ENCODE measurements at regions of chr20 and their contacts with region 1.

Region 1: DNA sequence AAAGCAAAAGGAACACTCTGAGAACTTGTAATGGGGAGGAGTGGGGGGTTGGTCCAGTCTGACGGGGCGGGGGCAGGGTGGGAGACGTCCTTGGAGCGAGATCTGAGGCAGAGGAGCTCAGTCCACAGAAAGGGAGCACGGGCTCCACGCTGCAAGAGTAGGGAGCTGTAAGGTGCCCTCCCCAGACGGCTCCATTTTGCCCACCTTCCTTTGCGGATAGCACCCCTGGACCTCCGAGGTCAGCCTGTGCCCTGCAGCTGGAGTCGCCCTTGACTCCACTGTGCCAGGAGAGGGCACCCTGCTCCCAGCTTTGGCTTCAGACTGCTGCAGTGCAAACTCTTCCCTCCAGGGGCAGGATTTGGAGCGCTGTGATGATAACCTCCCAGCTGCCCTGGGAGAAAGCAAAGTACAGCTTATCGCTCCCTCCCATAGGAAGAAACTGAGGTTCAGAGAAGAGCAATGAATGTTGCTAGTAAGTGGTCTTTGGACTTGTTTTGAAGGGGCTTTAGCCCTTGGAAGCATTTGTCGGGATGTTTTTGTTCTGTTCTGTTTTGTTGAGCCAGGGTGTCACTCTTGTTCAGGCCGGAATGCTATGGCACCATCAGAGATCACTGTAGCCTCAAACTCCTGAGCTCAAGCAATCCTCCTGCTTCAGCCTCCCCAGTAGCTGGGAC is 9.5 kb upstream of the AHCY start:
- DNase-seq: peak; percentile 76 to 89 (median 80)
- H3K4me3 ChIP-seq: no peak overlapping the region
- H3K4me3 Mint-ChIP-seq: peak overlapping the region in 6 of 7 donors; percentile 0 to 63 (median 28)
- H3K27ac ChIP-seq: no peak overlapping the region
- H3K27ac Mint-ChIP-seq: peak overlapping the region in 4 of 8 donors; percentile 11 to 90 (median 70)
- H3K4me1 ChIP-seq: peaks cover 9% of the 10 kb centered on the region
- H3K4me1 Mint-ChIP-seq: peaks cover 6 to 13% (median 12%) of the 10 kb centered on the region in 3 donors
- H3K27me3 ChIP-seq: peaks cover 7% of the 10 kb centered on the region
- H3K27me3 Mint-ChIP-seq: peaks cover 2 to 23% of the 10 kb centered on the region in 2 donors

Region 2: GRCh38 chr20:34337982-34338726 is 25.5 kb after region 1 on chr20:
- CTCF ChIA-PET with region 1: interaction called, 10 read pairs
- POLR2A ChIA-PET with region 1: no interaction called
- DNase-seq: peak in 2 of 5 donors; percentile 24 to 66
- H3K4me3 ChIP-seq: no peak overlapping the region
- H3K4me3 Mint-ChIP-seq: peak overlapping the region in 6 of 7 donors; percentile 48 to 89 (median 78)
- H3K27ac ChIP-seq: peak overlapping the region; percentile 29
- H3K27ac Mint-ChIP-seq: peak overlapping the region in 7 of 8 donors; percentile 83 to 95 (median 92)
- H3K4me1 ChIP-seq: peaks cover 20% of the 10 kb centered on the region
- H3K4me1 Mint-ChIP-seq: peaks cover 7 to 45% (median 38%) of the 10 kb centered on the region in 3 donors
- H3K27me3 ChIP-seq: no peaks in the 10 kb centered on the region
- H3K27me3 Mint-ChIP-seq: no peaks in the 10 kb centered on the region

Region 3: GRCh38 chr20:34363062-34363464 is 50.4 kb after region 1 on chr20 and contains the start of gene ITCH:
- CTCF ChIA-PET with region 1: interaction called, 22 read pairs
- POLR2A ChIA-PET with region 1: no interaction called
- DNase-seq: peak; percentile 86 to 95 (median 87)
- H3K4me3 ChIP-seq: peak within 1 kb of the TSS; percentile 72
- H3K4me3 Mint-ChIP-seq: peak within 1 kb of the TSS; percentile 93 to 100 (median 99)
- H3K27ac ChIP-seq: peak within 1 kb of the TSS; percentile 87
- H3K27ac Mint-ChIP-seq: peak within 1 kb of the TSS; percentile 86 to 100 (median 100)
- H3K4me1 ChIP-seq: peaks cover 44% of the 10 kb centered on the region
- H3K4me1 Mint-ChIP-seq: peaks cover 36 to 50% (median 47%) of the 10 kb centered on the region in 3 donors
- H3K27me3 ChIP-seq: no peaks in the 10 kb centered on the region
- H3K27me3 Mint-ChIP-seq: peaks cover 0 to 1% of the 10 kb centered on the region in 2 donors
- total RNA-seq, gene ITCH: 45.6 to 51.7 TPM

Region 4: GRCh38 chr20:34407962-34408474 is 95.3 kb after region 1 on chr20:
- CTCF ChIA-PET with region 1: interaction called, 14 read pairs
- POLR2A ChIA-PET with region 1: no interaction called
- DNase-seq: no peak
- H3K4me3 ChIP-seq: no peak overlapping the region
- H3K4me3 Mint-ChIP-seq: no peak overlapping the region
- H3K27ac ChIP-seq: no peak overlapping the region
- H3K27ac Mint-ChIP-seq: peak overlapping the region in 4 of 8 donors; percentile 32 to 84 (median 76)
- H3K4me1 ChIP-seq: peaks cover 20% of the 10 kb centered on the region
- H3K4me1 Mint-ChIP-seq: peaks cover 42 to 67% (median 50%) of the 10 kb centered on the region in 3 donors
- H3K27me3 ChIP-seq: no peaks in the 10 kb centered on the region
- H3K27me3 Mint-ChIP-seq: no peaks in the 10 kb centered on the region

Region 5: GRCh38 chr20:34516247-34517113 is 203.8 kb after region 1 on chr20 and contains the start of gene DYNLRB1:
- CTCF ChIA-PET with region 1: interaction called, 29 read pairs
- POLR2A ChIA-PET with region 1: no interaction called
- DNase-seq: peak; percentile 90 to 97 (median 93)
- H3K4me3 ChIP-seq: peak within 1 kb of the TSS; percentile 85
- H3K4me3 Mint-ChIP-seq: peak within 1 kb of the TSS; percentile 94 to 100 (median 99)
- H3K27ac ChIP-seq: peak within 1 kb of the TSS; percentile 73
- H3K27ac Mint-ChIP-seq: peak within 1 kb of the TSS; percentile 89 to 100 (median 96)
- H3K4me1 ChIP-seq: peaks cover 24% of the 10 kb centered on the region
- H3K4me1 Mint-ChIP-seq: peaks cover 49 to 81% (median 81%) of the 10 kb centered on the region in 3 donors
- H3K27me3 ChIP-seq: no peaks in the 10 kb centered on the region
- H3K27me3 Mint-ChIP-seq: no peaks in the 10 kb centered on the region
- total RNA-seq, gene DYNLRB1: 81.1 to 81.2 TPM

Region 6: GRCh38 chr20:34709044-34709830 is 396.6 kb after region 1 on chr20:
- CTCF ChIA-PET with region 1: interaction called, 14 read pairs
- POLR2A ChIA-PET with region 1: interaction called, 3 read pairs
- DNase-seq: peak; percentile 77 to 87 (median 80)
- H3K4me3 ChIP-seq: peak overlapping the region; percentile 76
- H3K4me3 Mint-ChIP-seq: peak overlapping the region; percentile 86 to 96 (median 90)
- H3K27ac ChIP-seq: peak overlapping the region; percentile 79
- H3K27ac Mint-ChIP-seq: peak overlapping the region; percentile 82 to 99 (median 92)
- H3K4me1 ChIP-seq: peaks cover 14% of the 10 kb centered on the region
- H3K4me1 Mint-ChIP-seq: peaks cover 14 to 34% (median 19%) of the 10 kb centered on the region in 3 donors
- H3K27me3 ChIP-seq: no peaks in the 10 kb centered on the region
- H3K27me3 Mint-ChIP-seq: peaks cover 0 to 5% of the 10 kb centered on the region in 2 donors

Region 7: GRCh38 chr20:34768096-34768495 is 455.4 kb after region 1 on chr20:
- CTCF ChIA-PET with region 1: interaction called, 73 read pairs
- POLR2A ChIA-PET with region 1: no interaction called
- DNase-seq: no peak
- H3K4me3 ChIP-seq: no peak overlapping the region
- H3K4me3 Mint-ChIP-seq: no peak overlapping the region
- H3K27ac ChIP-seq: no peak overlapping the region
- H3K27ac Mint-ChIP-seq: no peak overlapping the region
- H3K4me1 ChIP-seq: no peaks in the 10 kb centered on the region
- H3K4me1 Mint-ChIP-seq: peaks cover 0 to 3% (median 2%) of the 10 kb centered on the region in 3 donors
- H3K27me3 ChIP-seq: no peaks in the 10 kb centered on the region
- H3K27me3 Mint-ChIP-seq: no peaks in the 10 kb centered on the region

Measured in CD8-positive, alpha-beta memory T cell (primary cell).